A549 (cell line): ENCODE measurements at regions of chr6 and their contacts with region 1.

Region 1: GRCh38 chr6:152948150-152948768 is 34.6 kb downstream of the FBXO5 start:
- DNase-seq: peak; percentile 7 to 43
- ATAC-seq: peak; percentile 73 to 92
- H3K4me3 ChIP-seq: no peak overlapping the region
- H3K27ac ChIP-seq: no peak overlapping the region
- H3K4me1 ChIP-seq: peaks cover 11% of the 10 kb centered on the region; the same call in 1 of the 3 replicates
- CTCF ChIP-seq: peak; percentile 68
- EP300 ChIP-seq: no peak
- POLR2A ChIP-seq: no peak
- RAD21 ChIP-seq: peak; percentile 76 to 78

Region 2: GRCh38 chr6:152750694-152751093 is 197.6 kb before region 1 on chr6 and contains the start of gene VIP:
- CTCF ChIA-PET with region 1: interaction called, 43 read pairs
- POLR2A ChIA-PET with region 1: no interaction called
- DNase-seq: peak in 1 of 2 experiments; percentile 16
- ATAC-seq: peak; percentile 54 to 67; a peak in 3 of 6 replicates
- H3K4me3 ChIP-seq: no peak within 1 kb of the TSS
- H3K27ac ChIP-seq: no peak within 1 kb of the TSS
- H3K4me1 ChIP-seq: peaks cover 10% of the 10 kb centered on the region
- CTCF ChIP-seq: no peak
- EP300 ChIP-seq: no peak
- POLR2A ChIP-seq: no peak
- RAD21 ChIP-seq: no peak
- polyA plus RNA-seq, gene VIP: 0.31 and 0.60 TPM in 2 replicates

Region 3: DNA sequence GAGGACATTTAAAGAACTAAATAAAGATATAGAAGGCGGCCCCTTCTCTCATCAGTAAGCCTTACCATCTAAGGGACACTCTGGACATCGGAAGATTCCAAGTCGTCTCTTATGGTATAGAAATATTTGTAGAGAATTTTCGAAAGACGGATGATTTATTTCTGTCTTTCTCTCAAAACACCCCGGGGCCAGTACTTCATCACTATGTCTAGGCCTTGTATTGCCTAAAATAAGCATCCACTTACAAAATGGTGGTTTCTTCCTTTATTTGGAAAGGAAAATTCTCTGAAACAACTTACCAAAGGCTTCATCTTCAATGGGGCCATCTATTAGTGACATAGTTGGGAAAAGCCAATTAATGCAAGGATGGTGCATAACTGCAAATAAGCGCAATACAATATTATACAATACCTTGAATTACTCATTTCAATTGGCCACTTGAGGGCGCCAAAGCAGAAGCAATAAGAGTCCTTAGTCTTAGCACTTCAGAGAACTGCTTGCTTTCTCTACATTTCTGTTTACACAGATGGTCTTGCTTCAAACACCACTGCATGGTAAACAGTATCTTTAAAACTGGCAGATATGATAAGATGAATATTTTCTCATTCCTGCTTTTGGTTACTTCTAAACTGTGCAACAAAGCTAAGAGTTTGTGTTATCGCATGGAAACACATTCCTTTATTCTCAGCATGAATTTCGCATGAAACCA is 84.5 kb before region 1 on chr6:
- CTCF ChIA-PET with region 1: interaction called, 25 read pairs
- POLR2A ChIA-PET with region 1: no interaction called
- DNase-seq: peak; percentile 12 to 66
- ATAC-seq: peak; percentile 89 to 94
- H3K4me3 ChIP-seq: no peak overlapping the region
- H3K27ac ChIP-seq: no peak overlapping the region
- H3K4me1 ChIP-seq: no peaks in the 10 kb centered on the region
- CTCF ChIP-seq: peak; percentile 70
- EP300 ChIP-seq: no peak
- POLR2A ChIP-seq: no peak
- RAD21 ChIP-seq: peak; percentile 72 to 77

Region 4: GRCh38 chr6:152975204-152975915 is 27.1 kb after region 1 on chr6:
- CTCF ChIA-PET with region 1: no interaction called
- POLR2A ChIA-PET with region 1: no interaction called
- DNase-seq: no peak
- ATAC-seq: no peak
- H3K4me3 ChIP-seq: no peak overlapping the region
- H3K27ac ChIP-seq: no peak overlapping the region
- H3K4me1 ChIP-seq: peaks cover 41% of the 10 kb centered on the region
- CTCF ChIP-seq: no peak
- EP300 ChIP-seq: no peak
- POLR2A ChIP-seq: no peak
- RAD21 ChIP-seq: no peak

Region 5: DNA sequence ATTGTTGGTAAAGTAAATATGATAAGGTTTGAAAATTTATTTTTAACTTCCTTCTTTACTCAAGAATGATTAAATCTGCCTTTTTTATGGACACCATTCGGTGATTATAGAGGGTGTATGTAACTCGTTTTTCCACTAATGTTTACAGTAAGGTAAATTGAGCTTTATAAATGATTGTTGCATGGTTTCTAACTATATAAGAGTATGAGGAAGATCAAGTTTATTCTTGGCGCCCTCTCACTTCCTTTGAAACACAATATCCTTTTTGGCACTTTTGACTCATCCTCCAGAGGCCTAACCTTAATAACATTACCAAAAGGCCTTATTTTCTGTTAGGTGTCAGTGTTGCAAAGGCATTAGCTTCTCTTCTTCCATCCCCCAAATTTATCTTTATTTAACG is 96.0 kb after region 1 on chr6:
- CTCF ChIA-PET with region 1: no interaction called
- POLR2A ChIA-PET with region 1: no interaction called
- DNase-seq: no peak
- ATAC-seq: no peak
- H3K4me3 ChIP-seq: no peak overlapping the region
- H3K27ac ChIP-seq: no peak overlapping the region
- H3K4me1 ChIP-seq: no peaks in the 10 kb centered on the region
- CTCF ChIP-seq: no peak
- EP300 ChIP-seq: no peak
- POLR2A ChIP-seq: no peak
- RAD21 ChIP-seq: no peak

Region 6: GRCh38 chr6:153210083-153210482 is 261.8 kb after region 1 on chr6:
- CTCF ChIA-PET with region 1: no interaction called
- POLR2A ChIA-PET with region 1: no interaction called
- DNase-seq: no peak
- ATAC-seq: no peak
- H3K4me3 ChIP-seq: no peak overlapping the region
- H3K27ac ChIP-seq: no peak overlapping the region
- H3K4me1 ChIP-seq: no peaks in the 10 kb centered on the region
- CTCF ChIP-seq: no peak
- EP300 ChIP-seq: no peak
- POLR2A ChIP-seq: no peak
- RAD21 ChIP-seq: no peak

Region 7: DNA sequence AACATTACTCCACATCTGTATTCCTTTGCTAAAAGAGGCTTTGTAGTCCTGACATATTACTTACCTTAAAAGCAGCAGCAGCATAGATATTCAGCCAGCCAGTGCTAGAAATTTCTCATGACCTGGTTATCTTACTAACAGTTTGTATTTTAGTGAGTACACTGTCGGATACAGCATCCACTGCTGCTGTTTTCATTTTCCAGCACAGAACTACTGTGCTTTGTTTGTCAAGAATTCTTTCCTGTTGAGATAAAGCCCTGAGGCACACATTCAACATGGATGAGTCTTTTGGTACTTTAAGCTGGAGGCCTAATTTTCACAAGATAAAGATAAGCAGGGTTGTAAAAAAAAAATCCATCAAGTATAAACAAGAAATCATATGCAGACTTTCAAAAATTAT is 779.6 kb after region 1 on chr6:
- CTCF ChIA-PET with region 1: no interaction called
- POLR2A ChIA-PET with region 1: no interaction called
- DNase-seq: no peak
- ATAC-seq: no peak
- H3K4me3 ChIP-seq: no peak overlapping the region
- H3K27ac ChIP-seq: no peak overlapping the region
- H3K4me1 ChIP-seq: no peaks in the 10 kb centered on the region
- CTCF ChIP-seq: no peak
- EP300 ChIP-seq: no peak
- POLR2A ChIP-seq: no peak
- RAD21 ChIP-seq: no peak